Heart right ventricle (tissue), 16 donors: ENCODE measurements at regions of chr12 and their contacts with region 1.

Region 1: GRCh38 chr12:66860752-66861750 is 182.2 kb upstream of the GRIP1 start:
- DNase-seq: peak; percentile 19 to 28
- ATAC-seq: peak in 1 of 8 donors; percentile 39
- H3K4me3 ChIP-seq: no peak overlapping the region
- H3K27ac ChIP-seq: no peak overlapping the region
- H3K4me1 ChIP-seq: no peaks in the 10 kb centered on the region
- H3K27me3 ChIP-seq: peaks cover 0 to 13% (median 3%) of the 10 kb centered on the region in 7 donors
- CTCF ChIP-seq: peak; percentile 61 to 92 (median 84)

Region 2: DNA sequence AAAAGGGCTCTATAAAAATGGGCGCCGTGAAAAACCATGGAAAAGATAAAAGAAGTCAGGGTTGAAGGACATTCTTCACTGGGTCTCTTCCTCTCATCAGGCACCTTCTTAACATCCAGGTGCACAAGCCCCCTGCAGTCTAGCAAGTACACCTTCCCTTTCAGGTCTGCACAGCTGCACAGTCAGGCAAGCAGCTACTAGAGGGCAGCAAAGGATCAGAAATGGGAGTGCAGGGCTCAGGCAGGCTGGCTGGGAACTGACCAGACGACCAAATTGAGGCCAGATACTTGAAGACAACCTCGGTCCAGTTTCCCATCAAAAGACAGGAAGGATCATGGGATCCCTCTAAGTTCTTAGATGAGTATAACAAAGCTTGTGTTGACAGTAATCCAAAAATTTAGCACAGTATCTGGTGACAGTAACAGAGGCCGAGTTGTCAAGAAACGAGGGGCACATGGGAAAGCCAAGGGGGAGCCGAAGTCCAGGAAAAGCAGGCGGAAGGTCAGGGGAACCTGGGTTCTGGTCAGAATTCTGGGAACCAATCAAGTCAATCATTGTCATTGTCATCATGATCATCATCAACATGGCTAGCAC is 172.1 kb before region 1 on chr12:
- intact Hi-C with region 1: loop called in 9 of 10 experiments (anchors 1 to 10 kb)
- DNase-seq: peak; percentile 13 to 17
- ATAC-seq: peak in 3 of 8 donors; percentile 61 to 79 (median 68)
- H3K4me3 ChIP-seq: no peak overlapping the region
- H3K27ac ChIP-seq: no peak overlapping the region
- H3K4me1 ChIP-seq: peaks cover 0 to 7% (median 0%) of the 10 kb centered on the region in 9 donors
- H3K27me3 ChIP-seq: peaks cover 0 to 13% (median 8%) of the 10 kb centered on the region in 7 donors
- CTCF ChIP-seq: peak; percentile 11 to 64 (median 48)

Region 3: DNA sequence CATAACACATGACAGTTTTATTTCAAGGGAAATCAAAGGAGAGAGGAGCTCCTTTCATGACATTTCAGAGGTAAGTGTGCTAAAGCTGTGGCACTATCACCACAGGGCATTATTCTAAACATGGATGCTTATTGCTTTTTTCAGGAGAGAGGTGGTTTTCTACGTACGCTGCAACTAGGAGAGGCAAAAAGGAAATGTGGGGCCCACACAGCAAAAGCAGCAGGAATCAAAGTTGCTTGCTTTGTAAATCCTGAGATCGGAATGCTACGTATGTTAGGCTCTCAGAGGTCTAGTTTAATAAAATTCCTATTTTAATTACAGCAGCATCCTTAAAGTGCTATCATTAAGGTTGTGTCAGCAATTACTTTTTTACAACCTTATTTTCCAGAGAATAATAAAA is 127.2 kb before region 1 on chr12:
- intact Hi-C with region 1: no loop called
- DNase-seq: no peak
- ATAC-seq: no peak
- H3K4me3 ChIP-seq: no peak overlapping the region
- H3K27ac ChIP-seq: no peak overlapping the region
- H3K4me1 ChIP-seq: no peaks in the 10 kb centered on the region
- H3K27me3 ChIP-seq: no peaks in the 10 kb centered on the region
- CTCF ChIP-seq: no peak

Region 4: DNA sequence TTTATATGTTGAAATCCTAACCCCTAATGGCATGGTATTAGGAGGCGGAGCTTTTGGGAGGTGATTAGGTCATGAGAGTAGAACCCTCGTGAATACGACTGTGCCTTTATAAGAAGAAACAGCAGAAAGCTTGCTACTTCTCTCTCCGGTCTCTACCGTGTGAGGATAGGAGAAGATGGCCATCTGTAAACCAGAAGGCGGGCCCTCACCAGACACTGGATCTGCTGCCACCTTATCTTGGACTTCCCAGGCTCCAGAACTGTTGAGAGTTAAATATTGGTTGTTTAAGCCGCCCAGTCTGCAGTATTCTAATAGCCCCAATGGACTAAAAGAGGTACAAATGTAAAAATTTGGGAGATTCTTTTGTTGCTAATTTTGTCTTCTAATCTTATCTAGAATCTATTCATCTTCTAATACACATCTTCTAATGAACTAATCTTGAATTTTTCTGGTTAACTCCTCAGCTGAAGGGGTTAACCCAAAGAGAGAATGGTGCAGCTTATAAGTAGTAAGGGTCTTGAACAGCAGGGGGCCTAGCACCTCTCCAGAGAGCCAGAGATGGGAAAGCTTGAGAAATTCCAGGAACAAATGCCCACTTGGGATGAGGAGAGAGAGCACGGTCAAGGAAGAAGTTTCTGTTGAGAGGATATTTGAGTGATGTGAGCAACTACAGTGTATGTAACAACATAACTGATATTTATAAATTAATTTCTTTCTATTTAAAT is 81.9 kb after region 1 on chr12:
- intact Hi-C with region 1: no loop called
- DNase-seq: no peak
- ATAC-seq: no peak
- H3K4me3 ChIP-seq: no peak overlapping the region
- H3K27ac ChIP-seq: no peak overlapping the region
- H3K4me1 ChIP-seq: no peaks in the 10 kb centered on the region
- H3K27me3 ChIP-seq: no peaks in the 10 kb centered on the region
- CTCF ChIP-seq: no peak